ENCODE measurements at regions of chr5 and their contacts with region 1.

Region 1: DNA sequence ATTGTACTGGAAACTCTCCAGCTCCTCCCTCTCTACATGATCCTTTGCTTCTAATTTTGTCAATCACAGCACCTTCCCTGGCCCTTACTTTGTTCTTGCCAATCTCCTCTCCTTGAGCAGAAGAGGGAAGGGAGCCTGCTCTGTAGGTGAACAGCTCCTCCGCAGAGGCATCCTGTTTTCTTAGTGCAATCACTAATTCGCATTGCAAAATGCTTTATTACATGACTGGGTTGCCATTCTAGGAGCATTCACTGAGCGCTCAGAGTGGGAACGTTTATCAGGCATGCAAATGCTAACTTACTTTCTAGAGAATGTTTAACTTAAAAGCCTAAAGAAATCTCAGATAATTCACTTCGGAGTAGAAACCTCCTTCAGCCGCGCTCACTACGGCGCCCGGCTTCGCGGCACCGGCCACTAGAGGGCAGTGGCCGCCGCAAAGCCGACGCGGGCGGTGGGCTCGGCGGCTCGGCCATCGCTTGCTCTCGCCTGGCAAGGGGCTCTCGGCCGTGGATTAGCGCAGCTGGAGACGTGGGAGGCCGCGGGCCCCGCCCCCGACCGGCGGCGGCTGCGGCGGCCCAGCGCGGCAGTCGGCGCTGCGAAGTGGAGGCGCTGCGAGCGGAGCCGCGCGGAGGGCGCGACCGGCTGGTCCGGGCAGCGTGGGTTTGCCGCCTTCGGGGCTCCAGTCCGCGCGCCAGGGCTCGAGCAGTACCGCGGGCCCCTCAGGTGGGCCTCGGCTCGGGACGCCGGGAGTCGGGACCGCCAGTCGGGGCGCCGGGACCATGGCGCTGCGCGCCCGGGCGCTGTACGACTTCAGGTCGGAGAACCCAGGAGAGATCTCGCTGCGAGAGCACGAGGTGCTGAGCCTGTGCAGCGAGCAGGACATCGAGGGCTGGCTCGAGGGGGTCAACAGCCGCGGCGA is at the start of gene SNX18:
- DNase-seq: peak; percentile 96
- H3K27ac ChIP-seq: peak within 1 kb of the TSS; percentile 74
- CTCF ChIP-seq: peak; percentile 99

Region 2: DNA sequence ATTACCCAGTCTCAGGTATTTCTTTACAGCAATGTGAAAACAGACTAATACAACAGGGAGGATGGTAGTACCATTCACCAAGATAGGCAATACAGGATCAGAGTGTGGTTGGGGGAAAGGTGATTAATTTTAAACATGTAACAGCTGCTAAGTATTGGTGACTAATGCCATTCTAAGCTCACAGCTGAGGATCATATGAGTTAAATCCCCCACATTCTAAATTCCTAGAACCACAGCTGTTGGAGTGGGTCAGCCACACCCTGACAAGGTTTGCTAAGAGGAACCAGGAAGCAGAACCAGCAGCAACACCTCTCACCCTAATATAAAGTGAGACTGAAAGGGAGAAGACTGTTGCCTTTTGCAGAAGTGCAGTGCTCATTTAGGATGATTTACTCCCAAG is 37.1 kb before region 1 on chr5:
- CTCF ChIA-PET with region 1: no interaction called
- POLR2A ChIA-PET with region 1: no interaction called
- DNase-seq: peak; percentile 25
- H3K27ac ChIP-seq: no peak overlapping the region
- CTCF ChIP-seq: no peak

Region 3: DNA sequence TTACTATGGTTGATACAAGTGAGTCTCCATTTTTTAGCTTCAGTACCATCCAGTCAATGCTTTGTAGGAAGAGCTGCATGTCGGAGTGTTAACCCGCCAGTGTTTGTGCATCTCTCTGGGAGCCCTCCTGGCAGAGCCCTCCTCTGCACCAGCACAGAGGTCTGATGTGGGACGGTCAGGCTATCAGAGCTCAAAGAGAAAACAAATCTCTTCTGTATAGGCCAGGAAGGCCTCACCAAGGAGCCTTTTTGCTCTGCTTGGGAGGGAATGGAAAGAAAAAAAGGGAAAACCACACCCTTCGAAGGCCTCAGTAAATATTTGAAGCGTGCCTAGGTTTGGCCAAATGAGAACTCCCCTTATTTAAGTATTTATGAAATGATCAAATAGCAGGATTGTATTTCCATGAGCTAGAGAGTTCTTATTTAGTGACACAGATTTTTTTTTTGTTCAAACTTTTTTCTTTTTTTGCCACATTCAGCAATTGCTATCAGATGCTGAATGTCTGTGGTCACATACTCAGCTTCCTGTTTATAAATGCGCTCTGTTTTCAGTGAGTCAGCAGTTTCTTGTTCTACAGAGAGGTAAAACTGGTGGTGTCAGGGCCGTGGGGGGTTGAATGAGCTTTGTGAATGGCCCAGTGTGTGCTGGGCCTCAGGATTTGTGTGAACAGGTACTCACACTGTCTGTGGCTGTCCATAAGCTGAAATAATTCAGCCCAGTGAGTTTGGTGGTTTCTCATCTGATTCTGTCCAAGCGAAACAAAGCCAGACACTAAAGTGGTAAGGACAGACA is 226.8 kb after region 1 on chr5:
- CTCF ChIA-PET with region 1: interaction called, 31 read pairs
- POLR2A ChIA-PET with region 1: no interaction called
- DNase-seq: peak; percentile 57
- H3K27ac ChIP-seq: no peak overlapping the region
- CTCF ChIP-seq: no peak

Region 4: DNA sequence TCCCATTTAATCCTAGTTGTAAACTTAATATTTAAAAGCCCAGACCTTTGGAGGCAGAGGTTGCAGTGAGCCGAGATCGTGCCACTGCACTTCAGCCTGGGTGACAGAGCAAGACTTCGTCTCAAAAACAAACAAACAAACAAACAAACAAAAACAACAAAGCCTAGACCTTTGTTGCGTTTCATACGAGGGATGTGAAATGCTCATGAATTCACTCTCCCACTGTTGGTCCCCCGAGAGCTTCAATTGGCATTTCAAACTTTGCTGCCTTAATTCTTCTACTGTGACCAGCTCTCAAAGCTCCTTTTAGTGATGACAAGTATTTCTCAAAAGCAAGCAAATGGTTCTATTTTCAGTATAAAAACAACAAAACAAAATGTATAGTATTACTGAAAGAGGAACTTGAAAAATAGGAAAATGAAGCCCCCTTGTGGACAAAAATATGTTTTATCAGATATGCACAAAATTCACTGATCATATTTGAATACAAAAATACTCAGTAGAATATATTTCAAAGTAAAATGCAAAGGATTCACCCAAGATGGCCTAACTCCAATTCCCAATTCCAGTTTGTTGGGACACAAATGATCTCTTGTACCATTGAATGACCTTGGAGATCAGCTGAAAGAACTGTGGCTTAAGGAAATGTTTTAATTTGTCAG is 327.6 kb after region 1 on chr5:
- CTCF ChIA-PET with region 1: interaction called, 48 read pairs
- POLR2A ChIA-PET with region 1: no interaction called
- DNase-seq: no peak
- H3K27ac ChIP-seq: no peak overlapping the region
- CTCF ChIP-seq: peak; percentile 79

Region 5: DNA sequence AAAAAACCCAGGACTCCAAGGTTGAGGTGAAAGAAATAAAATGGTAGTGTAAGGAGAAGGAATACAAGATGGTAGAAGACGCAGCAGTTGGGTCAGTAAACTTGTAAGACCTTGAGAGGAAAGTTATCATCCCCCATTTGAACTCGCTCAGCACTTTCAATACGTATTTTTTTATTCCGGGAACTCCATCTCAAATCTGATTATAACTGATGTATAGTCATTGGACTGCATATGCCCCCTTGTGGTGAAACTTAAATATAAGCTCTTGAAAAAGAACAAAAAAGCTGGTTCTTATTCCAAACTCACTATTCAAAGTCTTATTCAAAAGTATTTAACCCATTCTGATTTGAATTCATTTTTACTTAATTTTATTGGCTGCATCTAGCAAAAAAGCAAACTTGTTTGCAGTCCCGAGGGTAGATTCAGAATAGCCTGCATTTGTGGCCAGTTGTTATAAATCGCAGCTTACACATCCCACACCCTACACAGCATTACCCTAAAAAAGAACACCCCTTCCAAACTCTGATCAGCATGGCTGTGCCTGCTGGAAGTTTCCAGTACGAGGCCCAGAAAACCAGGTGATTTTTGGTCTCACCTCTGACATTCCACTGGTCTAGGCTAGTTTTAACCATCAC is 350.0 kb after region 1 on chr5:
- CTCF ChIA-PET with region 1: interaction called, 47 read pairs
- POLR2A ChIA-PET with region 1: interaction called, 4 read pairs
- DNase-seq: peak; percentile 66
- H3K27ac ChIP-seq: no peak overlapping the region
- CTCF ChIP-seq: peak; percentile 83

Region 6: GRCh38 chr5:54874373-54874921 is 357.0 kb after region 1 on chr5:
- CTCF ChIA-PET with region 1: interaction called, 19 read pairs
- POLR2A ChIA-PET with region 1: no interaction called
- DNase-seq: no peak
- H3K27ac ChIP-seq: no peak overlapping the region
- CTCF ChIP-seq: no peak

Region 7: DNA sequence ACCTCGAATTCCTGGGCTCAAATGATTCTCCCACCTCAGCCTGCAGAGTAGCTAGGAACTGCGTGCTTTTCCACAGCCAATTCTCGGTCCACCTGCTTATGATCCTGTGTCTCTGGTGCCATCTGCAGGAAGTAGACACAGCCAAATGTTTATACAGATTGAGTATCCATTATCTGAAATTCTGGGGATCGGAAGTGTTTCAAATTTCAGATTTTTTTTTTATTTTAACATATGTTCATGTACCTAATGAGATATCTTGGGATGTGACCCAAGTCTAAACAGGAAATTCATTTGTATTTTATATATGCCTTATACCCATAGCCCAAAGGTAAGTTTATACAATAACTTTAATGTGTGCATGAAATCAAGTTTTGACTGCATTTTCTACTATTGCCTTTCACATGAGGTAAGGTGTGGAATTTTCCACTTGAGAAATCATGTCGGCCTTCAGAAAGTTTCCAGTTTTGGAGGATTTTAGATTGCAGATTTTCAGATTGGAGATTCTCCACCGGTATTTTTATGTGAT is 378.4 kb after region 1 on chr5:
- CTCF ChIA-PET with region 1: interaction called, 24 read pairs
- POLR2A ChIA-PET with region 1: no interaction called
- DNase-seq: peak; percentile 54
- H3K27ac ChIP-seq: no peak overlapping the region
- CTCF ChIP-seq: peak; percentile 83

Region 8: GRCh38 chr5:55159763-55160492 is 642.5 kb after region 1 on chr5 and contains the start of gene GPX8:
- CTCF ChIA-PET with region 1: interaction called, 12 read pairs
- POLR2A ChIA-PET with region 1: no interaction called
- DNase-seq: peak; percentile 87
- H3K27ac ChIP-seq: no peak within 1 kb of the TSS
- CTCF ChIP-seq: peak; percentile 83

Measured in RWPE1 (cell line).